Naive thymus-derived CD8-positive, alpha-beta T cell (primary cell): ENCODE measurements at regions of chr18 and their contacts with region 1.

Region 1: DNA sequence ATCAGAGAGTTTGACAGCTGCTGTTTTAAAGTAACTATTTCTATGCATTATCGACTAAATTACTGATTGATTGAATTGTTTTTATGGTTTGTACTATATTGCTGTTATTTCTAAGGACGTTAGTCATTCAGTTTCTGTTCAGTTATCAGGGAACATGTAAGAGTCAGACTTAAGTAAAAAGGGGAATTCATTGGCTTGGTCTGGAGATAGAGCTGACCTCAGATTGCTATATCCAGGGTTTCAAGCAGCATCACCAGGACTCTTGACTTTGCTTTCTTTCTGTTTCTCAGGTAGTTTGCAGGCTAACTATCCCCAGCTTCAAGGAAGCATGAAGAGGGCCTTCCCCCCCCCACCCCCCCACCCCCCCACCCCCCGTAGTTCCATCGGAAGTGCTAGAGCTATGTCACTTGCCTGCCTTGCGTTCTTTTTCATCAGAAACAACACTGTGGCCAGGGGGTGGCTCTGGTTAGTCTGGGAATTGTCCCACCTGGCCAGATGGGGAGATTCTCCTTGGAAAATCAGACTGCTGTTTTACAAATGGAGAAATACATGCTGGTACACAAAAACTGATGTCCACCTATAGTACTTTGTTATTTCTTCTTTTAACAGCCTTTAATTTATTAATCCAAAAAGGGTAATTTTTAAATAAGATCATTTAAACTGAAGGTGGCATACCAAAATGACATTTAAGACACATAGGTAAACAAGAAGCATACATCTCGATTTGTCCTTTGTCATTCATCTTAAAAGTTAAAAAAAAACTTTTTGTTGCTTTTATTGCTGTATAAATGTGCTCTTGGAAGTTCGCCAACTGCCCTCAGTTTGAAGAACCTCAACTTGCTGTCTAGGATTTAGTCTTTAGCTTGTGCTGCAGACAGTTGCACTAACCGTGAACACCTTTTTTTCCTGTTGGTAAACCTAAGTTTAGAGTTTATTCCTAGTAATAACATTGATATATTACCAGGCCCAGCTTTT is 9.4 kb downstream of the SMAD4 start:
- DNase-seq: peak in 2 of 10 donors; percentile 6 to 9
- ATAC-seq: peak; percentile 57 to 64
- H3K4me3 Mint-ChIP-seq: peak overlapping the region in 9 of 10 donors; percentile 11 to 70 (median 39)
- H3K27ac Mint-ChIP-seq: peak overlapping the region; percentile 43 to 78 (median 60)
- H3K4me1 Mint-ChIP-seq: peaks cover 32 to 94% (median 90%) of the 10 kb centered on the region in 4 donors
- H3K27me3 Mint-ChIP-seq: no peaks in the 10 kb centered on the region

Region 2: GRCh38 chr18:50982802-50983179 is 56.6 kb before region 1 on chr18:
- POLR2A ChIA-PET with region 1: interaction called, 10 read pairs
- DNase-seq: no peak
- ATAC-seq: no peak
- H3K4me3 Mint-ChIP-seq: no peak overlapping the region
- H3K27ac Mint-ChIP-seq: peak overlapping the region in 1 of 10 donors; percentile 15
- H3K4me1 Mint-ChIP-seq: peaks cover 3 to 26% (median 16%) of the 10 kb centered on the region in 4 donors
- H3K27me3 Mint-ChIP-seq: no peaks in the 10 kb centered on the region

Region 3: DNA sequence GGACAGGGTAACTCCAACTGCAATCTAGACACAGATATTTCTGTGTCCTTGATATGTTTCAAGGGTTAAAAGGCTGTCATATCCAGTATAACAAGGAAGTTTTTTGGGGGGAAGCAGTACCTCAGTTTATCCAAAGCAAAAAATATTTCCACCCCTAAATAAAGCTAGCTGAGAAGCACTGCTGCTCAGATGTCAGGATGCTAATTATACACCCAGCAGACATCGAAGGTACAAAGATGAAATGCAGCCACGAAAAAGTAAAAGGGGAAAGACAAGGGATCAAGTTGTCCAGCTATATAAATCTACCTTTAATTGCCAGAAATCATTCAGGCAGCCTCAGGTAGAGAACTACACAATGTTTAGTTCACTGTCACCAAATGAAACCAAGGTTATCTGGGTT is 45.4 kb before region 1 on chr18:
- POLR2A ChIA-PET with region 1: no interaction called
- DNase-seq: no peak
- ATAC-seq: no peak
- H3K4me3 Mint-ChIP-seq: no peak overlapping the region
- H3K27ac Mint-ChIP-seq: no peak overlapping the region
- H3K4me1 Mint-ChIP-seq: no peaks in the 10 kb centered on the region
- H3K27me3 Mint-ChIP-seq: no peaks in the 10 kb centered on the region